Sigmoid colon (tissue), 7 donors: ENCODE measurements at regions of chr10 and their contacts with region 1.

Region 1: GRCh38 chr10:6202684-6203330 is at the start of gene PFKFB3:
- DNase-seq: peak; percentile 98
- H3K4me3 ChIP-seq: peak within 1 kb of the TSS; percentile 75 to 83 (median 80)
- H3K27ac ChIP-seq: peak within 1 kb of the TSS; percentile 97 to 99 (median 98)
- H3K4me1 ChIP-seq: peaks cover 0 to 42% (median 31%) of the 10 kb centered on the region in 4 donors
- H3K27me3 ChIP-seq: no peaks in the 10 kb centered on the region
- CTCF ChIP-seq: peak; percentile 96 to 98 (median 97)
- EP300 ChIP-seq: peak in 2 of 4 donors; percentile 81 to 85
- POLR2A ChIP-seq: peak; percentile 82 to 95
- total RNA-seq, gene PFKFB3: 24.5 to 29.3 (median 28.5) TPM

Region 2: DNA sequence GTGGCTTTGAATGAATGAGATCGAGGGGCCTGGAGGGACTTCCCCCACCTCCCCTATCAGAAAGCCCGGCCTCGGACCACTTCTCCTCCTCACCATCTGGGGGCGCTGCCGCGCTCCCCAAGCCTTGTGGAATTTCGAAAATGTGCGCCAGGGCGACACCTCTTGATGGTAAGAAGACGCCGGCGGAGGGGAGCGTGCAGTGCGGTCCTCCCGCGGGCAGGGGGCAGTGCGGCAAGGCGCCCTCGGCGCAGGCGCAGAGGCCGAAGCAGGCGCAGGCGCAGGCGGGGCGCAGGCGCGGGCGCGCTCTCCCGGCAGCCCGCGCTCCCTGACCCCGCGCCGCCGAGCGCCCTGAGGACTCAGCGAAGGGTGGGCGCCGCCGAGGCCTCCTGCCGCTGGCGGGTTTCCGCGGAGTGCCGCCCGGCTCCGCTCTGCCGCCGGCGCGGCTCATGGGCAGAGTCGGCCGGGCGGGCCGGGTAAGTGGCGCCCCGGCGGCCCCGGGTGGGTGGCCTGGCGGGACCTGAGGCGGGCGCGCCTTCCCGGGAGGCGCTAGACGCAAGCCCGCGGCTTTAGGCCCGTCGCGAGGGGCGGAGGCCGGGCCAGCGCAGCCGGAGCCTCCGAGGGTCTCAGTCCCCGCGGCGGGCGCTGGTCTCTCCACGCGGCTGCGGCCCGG is 114.0 kb before region 1 on chr10 and contains the start of gene RBM17:
- intact Hi-C with region 1: loop called (anchors 5 kb)
- DNase-seq: peak; percentile 99
- H3K4me3 ChIP-seq: peak within 1 kb of the TSS; percentile 77 to 100 (median 92)
- H3K27ac ChIP-seq: peak within 1 kb of the TSS; percentile 81 to 94 (median 90)
- H3K4me1 ChIP-seq: peaks cover 0 to 54% (median 39%) of the 10 kb centered on the region in 4 donors
- H3K27me3 ChIP-seq: no peaks in the 10 kb centered on the region
- CTCF ChIP-seq: peak; percentile 96 to 100 (median 98)
- EP300 ChIP-seq: no peak
- POLR2A ChIP-seq: no peak
- total RNA-seq, gene RBM17: 50.8 to 63.1 (median 54.8) TPM

Region 3: DNA sequence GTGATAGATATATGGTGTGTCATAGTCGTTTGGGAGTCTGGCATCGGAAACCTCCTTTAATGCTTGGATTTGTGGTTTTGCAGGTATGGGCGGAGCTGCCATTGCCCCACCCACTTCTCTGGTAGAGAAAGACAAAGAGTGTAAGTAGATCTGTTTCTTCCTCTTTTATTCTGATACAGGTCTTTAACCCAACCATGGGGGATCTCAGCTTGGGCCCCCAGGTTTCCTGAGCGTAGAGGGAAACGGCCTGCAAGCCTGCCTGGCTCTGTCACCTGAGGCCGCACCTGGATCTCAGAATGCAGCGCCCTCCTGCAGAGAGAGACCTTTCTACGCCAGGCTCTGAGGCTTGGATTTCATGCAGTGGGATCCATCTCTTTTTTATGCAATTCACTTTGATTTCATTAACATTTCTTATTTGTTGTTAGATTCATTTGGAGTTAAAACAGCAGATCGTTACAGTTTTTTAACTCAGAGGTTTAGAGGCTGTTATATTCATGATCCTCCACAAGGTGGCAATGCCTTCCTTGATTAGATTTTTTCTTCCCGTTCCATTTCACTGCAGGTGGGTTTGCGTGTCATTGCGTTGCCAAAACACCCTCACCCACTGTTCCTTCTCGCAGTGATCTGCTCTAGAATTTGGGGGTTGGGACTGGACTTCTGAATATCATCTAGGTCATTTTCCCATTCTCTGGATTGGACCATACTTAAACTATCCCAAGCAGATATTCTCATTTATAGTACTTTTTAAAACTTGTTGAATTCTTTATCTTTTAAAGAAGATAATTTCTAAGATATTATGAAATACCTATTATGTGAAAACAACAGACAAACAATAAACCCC is 94.0 kb before region 1 on chr10:
- intact Hi-C with region 1: loop called (anchors 2 kb)
- DNase-seq: no peak
- H3K4me3 ChIP-seq: no peak overlapping the region
- H3K27ac ChIP-seq: no peak overlapping the region
- H3K4me1 ChIP-seq: peaks cover 0 to 3% (median 0%) of the 10 kb centered on the region in 4 donors
- H3K27me3 ChIP-seq: no peaks in the 10 kb centered on the region
- CTCF ChIP-seq: peak; percentile 62 to 71 (median 67)
- EP300 ChIP-seq: no peak
- POLR2A ChIP-seq: no peak

Region 4: DNA sequence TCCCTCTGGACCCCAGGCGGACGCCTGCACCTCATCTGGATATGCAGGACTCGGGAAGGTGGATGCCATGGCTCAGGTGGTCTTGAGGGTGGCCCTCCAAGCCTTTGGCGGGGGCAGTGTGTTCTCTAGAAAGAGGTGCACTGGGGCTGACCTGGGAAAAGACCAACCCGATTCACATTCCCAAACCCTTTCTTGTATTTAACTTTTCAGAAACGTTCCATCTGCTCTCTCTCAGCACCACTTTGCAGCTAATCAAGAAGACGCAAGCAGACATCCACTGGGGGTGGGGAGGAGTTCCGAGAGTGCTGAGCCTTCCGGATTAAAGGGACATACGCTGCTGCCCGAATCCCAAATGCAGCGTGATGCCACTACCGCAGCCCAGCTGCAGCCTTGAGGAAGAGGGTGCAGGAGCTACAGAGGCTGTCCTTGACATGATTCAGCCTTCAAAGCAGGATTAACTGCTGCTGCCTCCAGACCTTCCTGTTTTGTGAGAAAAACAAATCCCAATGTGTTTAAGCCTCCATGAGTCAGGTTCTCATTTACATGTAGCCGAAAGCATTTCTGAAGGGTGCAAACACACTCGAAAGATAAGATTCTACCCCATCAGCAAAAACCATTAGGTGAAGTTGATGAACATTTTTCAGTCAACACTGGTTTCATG is 74.1 kb before region 1 on chr10:
- intact Hi-C with region 1: no loop called
- DNase-seq: no peak
- H3K4me3 ChIP-seq: no peak overlapping the region
- H3K27ac ChIP-seq: no peak overlapping the region
- H3K4me1 ChIP-seq: peaks cover 0 to 9% (median 2%) of the 10 kb centered on the region in 4 donors
- H3K27me3 ChIP-seq: peaks cover 0 to 12% (median 0%) of the 10 kb centered on the region in 3 donors
- CTCF ChIP-seq: no peak
- EP300 ChIP-seq: no peak
- POLR2A ChIP-seq: no peak

Region 5: DNA sequence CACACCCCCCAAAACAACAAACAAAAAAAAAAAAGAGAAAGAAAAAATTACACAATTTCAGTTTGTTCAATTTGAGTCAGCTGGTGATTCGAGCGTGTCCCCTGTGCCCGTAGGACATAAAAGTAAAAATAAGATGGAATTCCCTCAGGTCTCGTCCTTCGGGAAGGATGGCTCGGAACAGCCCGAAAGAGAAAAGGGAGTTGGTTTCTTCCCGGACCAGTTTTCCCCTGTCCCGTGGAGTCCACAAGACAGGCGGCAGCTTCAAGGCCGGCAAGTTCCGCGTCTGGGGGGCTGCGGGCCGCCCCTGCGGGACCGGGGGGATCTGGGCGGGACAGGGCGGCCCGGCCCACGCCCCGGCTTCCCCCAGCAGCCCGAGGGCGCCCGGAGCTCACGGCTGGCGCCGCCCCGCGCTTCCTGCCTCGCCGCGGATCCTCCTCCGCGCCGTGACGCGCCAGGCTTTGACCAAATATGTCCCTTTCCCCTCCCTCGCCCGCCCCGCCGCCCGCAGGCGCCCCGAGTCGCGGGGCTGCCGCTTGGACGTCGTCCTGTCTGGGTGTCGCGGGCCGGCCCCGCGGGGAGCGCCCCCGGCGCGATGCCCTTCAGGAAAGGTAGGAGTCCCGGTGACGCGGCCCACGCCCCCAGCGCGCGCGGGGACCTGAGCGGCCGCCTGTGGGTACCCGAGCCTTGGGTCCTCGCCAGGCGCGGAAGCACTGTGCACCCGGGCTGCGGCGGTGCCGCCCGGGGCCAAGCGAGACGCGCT is 58.2 kb before region 1 on chr10:
- intact Hi-C with region 1: loop called (anchors 1 kb)
- DNase-seq: peak; percentile 95
- H3K4me3 ChIP-seq: peak overlapping the region; percentile 75 to 93 (median 82)
- H3K27ac ChIP-seq: peak overlapping the region; percentile 81 to 91 (median 86)
- H3K4me1 ChIP-seq: peaks cover 0 to 22% (median 16%) of the 10 kb centered on the region in 4 donors
- H3K27me3 ChIP-seq: peaks cover 0 to 14% (median 0%) of the 10 kb centered on the region in 3 donors
- CTCF ChIP-seq: no peak
- EP300 ChIP-seq: no peak
- POLR2A ChIP-seq: peak in 1 of 2 donors; percentile 14

Region 6: GRCh38 chr10:6163364-6164270 is 39.2 kb before region 1 on chr10:
- intact Hi-C with region 1: loop called (anchors 1 kb)
- DNase-seq: peak; percentile 95
- H3K4me3 ChIP-seq: peak overlapping the region; percentile 62 to 73 (median 66)
- H3K27ac ChIP-seq: peak overlapping the region; percentile 90 to 97 (median 94)
- H3K4me1 ChIP-seq: peaks cover 0 to 38% (median 33%) of the 10 kb centered on the region in 4 donors
- H3K27me3 ChIP-seq: no peaks in the 10 kb centered on the region
- CTCF ChIP-seq: no peak
- EP300 ChIP-seq: peak in 2 of 4 donors; percentile 33 to 57
- POLR2A ChIP-seq: peak; percentile 52 to 61

Region 7: DNA sequence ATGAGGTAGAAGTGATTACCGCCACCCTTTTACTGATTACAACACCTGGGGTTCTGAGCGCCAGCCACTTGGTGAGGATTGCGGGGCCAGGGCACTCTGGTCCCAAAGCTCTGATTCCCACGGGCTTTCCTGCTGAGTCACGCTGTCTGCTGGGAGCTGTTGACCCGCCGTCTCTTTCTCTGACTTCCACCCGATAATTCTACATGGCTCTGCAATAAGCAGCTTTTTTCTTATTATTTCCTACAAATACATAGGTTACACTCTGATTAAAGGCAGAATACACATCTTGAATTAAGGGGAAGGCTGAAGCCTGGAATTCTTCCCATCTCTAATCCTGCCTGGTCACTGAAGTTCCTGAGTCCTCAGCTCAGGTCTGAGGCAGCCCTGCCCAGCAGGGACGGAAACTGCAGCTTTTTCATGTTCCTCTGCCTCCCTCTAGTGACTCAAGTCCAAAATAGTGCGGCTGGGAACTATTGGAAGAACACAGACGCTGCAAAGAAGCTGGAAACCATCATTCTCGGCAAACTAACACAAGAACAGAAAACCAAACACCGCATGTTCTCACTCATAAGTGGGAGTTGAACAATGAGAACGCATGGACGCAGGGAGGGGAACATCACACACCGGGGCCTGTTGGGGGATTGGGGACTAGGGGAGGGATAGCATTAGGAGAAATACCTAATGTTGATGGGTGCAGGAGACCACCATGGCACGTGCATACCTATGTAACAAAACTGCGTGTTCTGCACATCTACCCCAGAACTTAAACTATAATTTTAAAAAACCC is 198.9 kb after region 1 on chr10:
- intact Hi-C with region 1: loop called (anchors 2 kb)
- DNase-seq: peak; percentile 90
- H3K4me3 ChIP-seq: peak overlapping the region in 3 of 4 donors; percentile 34 to 45 (median 37)
- H3K27ac ChIP-seq: peak overlapping the region; percentile 51 to 71 (median 56)
- H3K4me1 ChIP-seq: peaks cover 0 to 21% (median 12%) of the 10 kb centered on the region in 4 donors
- H3K27me3 ChIP-seq: no peaks in the 10 kb centered on the region
- CTCF ChIP-seq: peak; percentile 74 to 87 (median 84)
- EP300 ChIP-seq: no peak
- POLR2A ChIP-seq: no peak